ENCODE measurements at regions of chr16 and their contacts with region 1.

Region 1: DNA sequence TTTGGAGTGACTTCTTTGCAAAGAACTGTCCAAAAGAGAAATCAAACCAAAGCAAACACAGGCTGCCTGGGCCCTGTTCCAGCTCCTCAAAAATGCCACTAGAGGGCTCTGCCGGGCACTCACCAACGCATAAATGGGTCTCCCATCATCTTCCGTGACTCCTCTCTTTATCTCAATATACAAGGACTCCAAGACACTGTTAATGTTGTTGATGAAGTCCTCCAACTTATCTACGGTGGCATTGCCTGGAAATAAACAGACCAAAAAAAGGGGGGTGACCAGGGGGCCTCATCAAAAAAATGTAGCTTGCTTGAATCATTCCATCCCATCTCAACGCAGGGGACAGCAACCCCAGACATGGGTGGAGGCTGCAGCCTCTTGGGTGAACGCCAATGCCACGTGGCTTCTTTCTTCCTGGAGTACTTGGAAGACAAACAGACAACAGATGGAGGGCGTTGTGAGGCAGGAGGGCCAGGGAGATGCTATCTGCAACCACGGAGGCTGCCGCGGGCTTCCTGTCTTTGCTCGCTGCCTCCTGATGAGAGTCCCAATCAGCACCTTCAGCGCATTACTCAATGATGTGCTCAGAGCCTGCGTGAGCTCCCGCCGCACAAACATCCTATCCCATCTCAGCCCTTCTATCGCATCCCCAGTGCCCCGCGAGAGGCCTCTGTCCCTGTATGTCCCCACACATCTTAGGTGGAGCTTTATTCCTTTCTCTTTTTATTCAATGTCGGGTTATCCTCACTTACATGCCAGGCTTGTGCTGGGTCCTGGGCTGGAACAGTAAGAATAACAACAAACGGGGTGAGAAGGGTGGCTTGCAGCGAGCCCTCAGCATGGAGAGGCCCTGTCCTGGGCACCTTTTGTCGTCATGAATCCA is 32.0 kb downstream of the KDM8 start:
- DNase-seq: peak; percentile 81 to 98 (median 94)
- ATAC-seq: peak; percentile 68
- H3K4me3 ChIP-seq: peak overlapping the region; percentile 1
- H3K4me3 Mint-ChIP-seq: peak overlapping the region; percentile 83
- H3K27ac ChIP-seq: peak overlapping the region; percentile 94 to 95
- H3K27ac Mint-ChIP-seq: peak overlapping the region; percentile 95
- H3K4me1 ChIP-seq: peaks cover 94% of the 10 kb centered on the region
- H3K4me1 Mint-ChIP-seq: peaks cover 91% of the 10 kb centered on the region
- H3K27me3 ChIP-seq: no peaks in the 10 kb centered on the region
- H3K27me3 Mint-ChIP-seq: no peaks in the 10 kb centered on the region
- CTCF ChIP-seq: peak; percentile 83

Region 2: GRCh38 chr16:26951947-26952346 is 283.3 kb before region 1 on chr16:
- CTCF ChIA-PET with region 1: no interaction called
- POLR2A ChIA-PET with region 1: no interaction called
- intact Hi-C with region 1: no loop called
- DNase-seq: no peak
- ATAC-seq: no peak
- H3K4me3 ChIP-seq: no peak overlapping the region
- H3K4me3 Mint-ChIP-seq: no peak overlapping the region
- H3K27ac ChIP-seq: no peak overlapping the region
- H3K27ac Mint-ChIP-seq: no peak overlapping the region
- H3K4me1 ChIP-seq: no peaks in the 10 kb centered on the region
- H3K4me1 Mint-ChIP-seq: no peaks in the 10 kb centered on the region
- H3K27me3 ChIP-seq: peaks cover 0 to 5% of the 10 kb centered on the region in 2 experiments
- H3K27me3 Mint-ChIP-seq: peaks cover 20% of the 10 kb centered on the region
- CTCF ChIP-seq: no peak

Region 3: GRCh38 chr16:27169511-27170071 is 65.7 kb before region 1 on chr16:
- CTCF ChIA-PET with region 1: interaction called, 23 read pairs
- POLR2A ChIA-PET with region 1: interaction called, 17 read pairs
- intact Hi-C with region 1: loop called in 1 of 2 experiments (anchors 2 kb)
- DNase-seq: peak; percentile 55 to 94 (median 75)
- ATAC-seq: peak; percentile 84
- H3K4me3 ChIP-seq: peak overlapping the region; percentile 5
- H3K4me3 Mint-ChIP-seq: peak overlapping the region; percentile 2
- H3K27ac ChIP-seq: peak overlapping the region in 1 of 2 donors; percentile 21
- H3K27ac Mint-ChIP-seq: peak overlapping the region; percentile 71
- H3K4me1 ChIP-seq: peaks cover 66% of the 10 kb centered on the region
- H3K4me1 Mint-ChIP-seq: peaks cover 75% of the 10 kb centered on the region
- H3K27me3 ChIP-seq: no peaks in the 10 kb centered on the region
- H3K27me3 Mint-ChIP-seq: no peaks in the 10 kb centered on the region
- CTCF ChIP-seq: no peak

Region 4: DNA sequence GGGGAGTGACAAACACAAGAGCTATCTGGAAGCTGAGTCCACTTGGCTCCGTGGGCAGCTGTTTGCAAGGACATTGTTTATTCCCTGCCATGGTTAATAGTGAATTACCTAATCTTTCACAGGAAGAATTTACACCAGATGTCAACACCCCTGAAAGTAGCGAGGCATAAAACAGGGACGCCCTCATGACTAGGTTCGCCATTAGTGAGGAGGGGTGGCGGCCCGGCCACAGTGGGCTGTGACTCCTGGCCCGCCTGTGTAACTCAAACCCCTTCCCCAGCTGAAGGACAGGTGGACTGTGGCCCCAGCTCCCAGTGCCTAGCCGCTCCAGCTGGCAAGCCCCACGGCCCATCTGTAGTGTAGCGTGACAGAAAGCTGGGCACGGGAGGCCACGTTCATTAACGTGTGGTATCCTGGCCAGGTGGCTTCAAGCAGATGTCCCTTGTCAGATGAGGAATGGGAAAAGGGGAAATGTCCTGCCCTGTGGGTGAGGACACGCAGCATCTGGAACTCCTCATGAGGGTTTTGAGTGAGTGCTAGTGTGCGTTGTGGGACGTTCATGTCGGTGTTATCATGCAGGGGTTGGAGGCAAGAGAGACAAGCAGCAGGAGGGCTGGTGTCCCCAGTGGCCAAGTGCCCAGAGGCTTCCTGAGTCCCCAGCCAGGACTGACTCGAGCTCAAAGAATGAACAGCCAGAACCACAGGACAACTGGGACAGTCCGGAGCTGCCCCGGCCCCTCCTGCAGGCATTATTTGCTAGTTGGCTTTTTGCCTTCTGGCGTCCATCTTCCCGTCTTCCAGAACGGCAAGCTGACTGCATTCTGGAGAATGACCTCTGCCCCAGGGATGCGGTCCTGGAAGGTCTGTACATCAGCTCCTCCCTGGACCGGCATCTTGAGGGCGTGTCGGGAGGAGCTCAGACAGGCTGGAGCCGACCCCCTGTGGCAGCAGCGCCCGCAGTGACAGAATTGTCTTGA is 12.8 kb before region 1 on chr16:
- CTCF ChIA-PET with region 1: interaction called, 7 read pairs
- POLR2A ChIA-PET with region 1: interaction called, 10 read pairs
- intact Hi-C with region 1: no loop called
- DNase-seq: no peak
- ATAC-seq: no peak
- H3K4me3 ChIP-seq: no peak overlapping the region
- H3K4me3 Mint-ChIP-seq: no peak overlapping the region
- H3K27ac ChIP-seq: no peak overlapping the region
- H3K27ac Mint-ChIP-seq: peak overlapping the region; percentile 61
- H3K4me1 ChIP-seq: peaks cover 20% of the 10 kb centered on the region
- H3K4me1 Mint-ChIP-seq: peaks cover 19% of the 10 kb centered on the region
- H3K27me3 ChIP-seq: no peaks in the 10 kb centered on the region
- H3K27me3 Mint-ChIP-seq: no peaks in the 10 kb centered on the region
- CTCF ChIP-seq: no peak

Region 5: DNA sequence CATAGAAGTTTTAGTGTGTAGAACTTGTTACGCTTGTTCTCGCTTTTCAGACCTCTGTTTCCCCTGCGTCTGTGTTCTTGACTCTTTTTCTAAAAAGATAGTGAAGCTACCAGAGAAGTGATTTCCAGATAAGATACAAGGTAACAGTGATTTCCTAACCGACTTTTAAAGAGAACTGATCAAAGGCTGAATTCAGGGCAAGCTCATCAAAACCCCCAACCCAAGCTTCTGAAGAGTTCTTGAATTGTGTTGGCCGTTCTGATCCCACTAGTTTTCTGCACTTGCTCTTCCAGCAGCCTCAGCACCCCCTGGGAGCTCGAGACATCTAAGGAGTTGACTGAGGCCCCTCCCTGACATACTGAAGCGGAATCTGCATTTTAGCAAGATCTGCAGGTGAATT is 45.9 kb after region 1 on chr16:
- CTCF ChIA-PET with region 1: interaction called, 5 read pairs
- POLR2A ChIA-PET with region 1: interaction called, 33 read pairs
- intact Hi-C with region 1: no loop called
- DNase-seq: peak in 3 of 14 experiments; percentile 8 to 36 (median 27)
- ATAC-seq: peak; percentile 46
- H3K4me3 ChIP-seq: peak overlapping the region; percentile 13
- H3K4me3 Mint-ChIP-seq: peak overlapping the region; percentile 75
- H3K27ac ChIP-seq: peak overlapping the region in 1 of 2 donors; percentile 53
- H3K27ac Mint-ChIP-seq: peak overlapping the region; percentile 88
- H3K4me1 ChIP-seq: peaks cover 7% of the 10 kb centered on the region
- H3K4me1 Mint-ChIP-seq: peaks cover 48% of the 10 kb centered on the region
- H3K27me3 ChIP-seq: no peaks in the 10 kb centered on the region
- H3K27me3 Mint-ChIP-seq: no peaks in the 10 kb centered on the region
- CTCF ChIP-seq: no peak

Region 6: DNA sequence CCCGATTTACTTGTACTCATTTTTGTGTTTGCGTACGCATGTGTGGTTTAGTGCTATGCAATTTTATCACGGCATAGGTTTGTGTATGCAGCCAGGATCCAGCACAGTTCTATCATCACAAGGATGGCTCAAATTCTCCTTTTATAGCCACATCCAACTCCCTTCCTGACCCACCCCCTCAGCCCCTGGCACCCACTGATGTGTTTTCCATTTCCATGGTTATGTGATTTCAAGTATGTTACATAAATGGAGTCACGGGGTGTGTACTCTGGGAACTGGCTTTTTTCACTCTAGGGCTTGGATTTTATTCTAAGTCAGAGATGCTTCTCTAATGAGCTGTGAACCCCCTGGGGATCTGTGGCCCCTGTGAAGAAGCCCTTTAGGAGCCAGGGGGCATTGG is 95.2 kb after region 1 on chr16:
- CTCF ChIA-PET with region 1: interaction called, 21 read pairs
- POLR2A ChIA-PET with region 1: interaction called, 5 read pairs
- intact Hi-C with region 1: no loop called
- DNase-seq: no peak
- ATAC-seq: no peak
- H3K4me3 ChIP-seq: no peak overlapping the region
- H3K4me3 Mint-ChIP-seq: peak overlapping the region; percentile 38
- H3K27ac ChIP-seq: peak overlapping the region in 1 of 2 donors; percentile 10
- H3K27ac Mint-ChIP-seq: peak overlapping the region; percentile 74
- H3K4me1 ChIP-seq: peaks cover 57% of the 10 kb centered on the region
- H3K4me1 Mint-ChIP-seq: peaks cover 91% of the 10 kb centered on the region
- H3K27me3 ChIP-seq: no peaks in the 10 kb centered on the region
- H3K27me3 Mint-ChIP-seq: no peaks in the 10 kb centered on the region
- CTCF ChIP-seq: no peak

Region 7: DNA sequence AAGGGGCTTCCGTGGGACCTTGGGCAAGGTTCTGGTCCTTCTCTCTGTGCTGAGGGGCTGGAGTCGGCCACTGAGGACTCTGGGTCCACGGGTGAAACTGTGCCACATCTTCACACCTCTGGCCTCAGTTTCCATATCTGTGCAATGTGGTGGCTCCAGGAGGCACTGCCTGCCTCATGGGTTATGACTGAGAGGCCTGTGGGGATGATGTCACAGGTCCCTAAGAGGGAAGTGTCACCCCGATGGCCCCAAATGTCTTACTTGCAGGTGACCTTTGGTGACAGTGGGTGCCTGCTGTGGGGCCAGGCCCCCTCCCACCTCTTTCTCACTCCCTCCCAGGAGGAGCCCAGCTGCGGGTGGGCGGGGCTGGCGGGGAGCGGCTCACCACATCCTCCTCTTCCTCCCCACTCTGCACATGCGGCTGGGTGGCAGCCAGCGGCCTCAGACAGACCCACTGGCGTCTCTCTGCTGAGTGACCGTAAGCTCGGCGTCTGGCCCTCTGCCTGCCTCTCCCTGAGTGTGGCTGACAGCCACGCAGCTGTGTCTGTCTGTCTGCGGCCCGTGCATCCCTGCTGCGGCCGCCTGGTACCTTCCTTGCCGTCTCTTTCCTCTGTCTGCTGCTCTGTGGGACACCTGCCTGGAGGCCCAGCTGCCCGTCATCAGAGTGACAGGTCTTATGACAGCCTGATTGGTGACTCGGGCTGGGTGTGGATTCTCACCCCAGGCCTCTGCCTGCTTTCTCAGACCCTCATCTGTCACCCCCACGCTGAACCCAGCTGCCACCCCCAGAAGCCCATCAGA is 166.7 kb after region 1 on chr16 and contains the start of gene IL21R:
- CTCF ChIA-PET with region 1: interaction called, 25 read pairs
- POLR2A ChIA-PET with region 1: interaction called, 25 read pairs
- intact Hi-C with region 1: loop called in 1 of 2 experiments (anchors 1 kb)
- DNase-seq: peak; percentile 76 to 95 (median 86)
- ATAC-seq: peak; percentile 81
- H3K4me3 ChIP-seq: peak within 1 kb of the TSS; percentile 99
- H3K4me3 Mint-ChIP-seq: peak within 1 kb of the TSS; percentile 98
- H3K27ac ChIP-seq: peak within 1 kb of the TSS; percentile 81 to 94
- H3K27ac Mint-ChIP-seq: peak within 1 kb of the TSS; percentile 90
- H3K4me1 ChIP-seq: peaks cover 63% of the 10 kb centered on the region
- H3K4me1 Mint-ChIP-seq: peaks cover 79% of the 10 kb centered on the region
- H3K27me3 ChIP-seq: no peaks in the 10 kb centered on the region
- H3K27me3 Mint-ChIP-seq: no peaks in the 10 kb centered on the region
- CTCF ChIP-seq: no peak
- total RNA-seq, gene IL21R: 34.5 to 34.8 TPM

Measured in CD4-positive, alpha-beta T cell (primary cell).